ENCODE measurements at regions of chr13 and their contacts with region 1.

Region 1: GRCh38 chr13:27868641-27869435 is 51.0 kb upstream of the PDX1 start:
- DNase-seq: no peak
- H3K4me3 Mint-ChIP-seq: no peak overlapping the region
- H3K27ac Mint-ChIP-seq: no peak overlapping the region
- H3K4me1 Mint-ChIP-seq: no peaks in the 10 kb centered on the region
- H3K27me3 Mint-ChIP-seq: peaks cover 26% of the 10 kb centered on the region

Region 2: DNA sequence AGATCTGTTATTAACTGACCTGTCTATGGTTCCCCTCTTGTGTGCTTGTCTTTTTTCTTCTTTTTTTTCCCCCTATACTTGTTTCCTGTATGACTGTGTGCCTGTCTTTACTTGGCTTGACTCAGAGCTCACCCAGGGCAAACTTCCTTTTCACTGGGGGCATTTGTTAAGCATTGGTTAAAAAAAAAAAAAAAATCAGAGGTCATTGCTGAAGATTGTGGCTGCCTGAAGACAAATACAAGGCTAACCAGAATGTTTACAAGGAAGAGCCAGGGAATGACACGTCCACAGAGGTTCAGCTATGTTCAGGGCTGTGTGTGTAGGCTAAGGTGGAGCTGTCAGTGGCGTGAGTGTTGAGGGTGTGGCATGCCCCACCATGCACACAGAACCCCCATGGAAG is 295.6 kb before region 1 on chr13:
- CTCF ChIA-PET with region 1: no interaction called
- POLR2A ChIA-PET with region 1: no interaction called
- DNase-seq: no peak
- H3K4me3 Mint-ChIP-seq: no peak overlapping the region
- H3K27ac Mint-ChIP-seq: no peak overlapping the region
- H3K4me1 Mint-ChIP-seq: peaks cover 15% of the 10 kb centered on the region
- H3K27me3 Mint-ChIP-seq: no peaks in the 10 kb centered on the region

Region 3: GRCh38 chr13:27953676-27954405 is 85.0 kb after region 1 on chr13:
- CTCF ChIA-PET with region 1: interaction called, 12 read pairs
- POLR2A ChIA-PET with region 1: no interaction called
- DNase-seq: peak; percentile 69
- H3K4me3 Mint-ChIP-seq: peak overlapping the region; percentile 61
- H3K27ac Mint-ChIP-seq: no peak overlapping the region
- H3K4me1 Mint-ChIP-seq: peaks cover 14% of the 10 kb centered on the region
- H3K27me3 Mint-ChIP-seq: peaks cover 58% of the 10 kb centered on the region

Region 4: DNA sequence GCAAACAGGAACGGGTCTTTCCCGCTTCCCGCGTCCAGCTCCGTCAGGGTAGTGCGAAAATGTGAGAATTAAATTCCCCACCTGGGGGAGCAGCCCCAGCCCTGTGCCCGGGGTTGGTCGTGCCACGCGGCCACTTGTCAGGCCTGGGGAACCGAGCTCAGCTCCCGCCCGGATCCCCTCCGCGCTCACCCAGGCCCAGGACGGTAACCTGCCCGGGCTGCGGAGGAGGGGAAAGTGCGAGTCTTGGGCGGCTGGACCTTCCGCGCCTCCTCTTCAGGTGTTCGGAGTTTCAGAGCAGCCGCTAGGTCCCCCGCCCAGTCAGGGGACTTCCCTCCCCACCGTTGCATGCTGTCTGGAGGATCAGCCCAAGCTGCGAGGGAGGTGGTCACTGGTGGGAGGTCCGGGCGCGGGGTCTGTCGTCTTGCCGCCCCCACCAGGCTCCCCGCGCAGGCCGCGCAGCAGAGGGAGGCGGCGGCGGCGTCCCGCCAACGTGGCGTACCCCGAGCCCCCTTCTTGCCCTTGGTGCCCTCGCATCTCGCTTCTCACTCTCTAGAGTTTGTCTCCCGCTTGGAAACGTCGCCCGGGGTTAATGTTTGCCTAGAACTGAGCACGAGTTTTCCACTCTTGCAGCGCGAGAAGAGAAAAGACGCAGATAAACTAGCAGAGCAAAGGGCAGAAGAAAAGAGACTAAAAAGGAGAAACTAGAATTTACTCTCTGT is 111.6 kb after region 1 on chr13:
- CTCF ChIA-PET with region 1: interaction called, 10 read pairs
- POLR2A ChIA-PET with region 1: no interaction called
- DNase-seq: no peak
- H3K4me3 Mint-ChIP-seq: no peak overlapping the region
- H3K27ac Mint-ChIP-seq: no peak overlapping the region
- H3K4me1 Mint-ChIP-seq: peaks cover 17% of the 10 kb centered on the region
- H3K27me3 Mint-ChIP-seq: peaks cover 70% of the 10 kb centered on the region

Region 5: DNA sequence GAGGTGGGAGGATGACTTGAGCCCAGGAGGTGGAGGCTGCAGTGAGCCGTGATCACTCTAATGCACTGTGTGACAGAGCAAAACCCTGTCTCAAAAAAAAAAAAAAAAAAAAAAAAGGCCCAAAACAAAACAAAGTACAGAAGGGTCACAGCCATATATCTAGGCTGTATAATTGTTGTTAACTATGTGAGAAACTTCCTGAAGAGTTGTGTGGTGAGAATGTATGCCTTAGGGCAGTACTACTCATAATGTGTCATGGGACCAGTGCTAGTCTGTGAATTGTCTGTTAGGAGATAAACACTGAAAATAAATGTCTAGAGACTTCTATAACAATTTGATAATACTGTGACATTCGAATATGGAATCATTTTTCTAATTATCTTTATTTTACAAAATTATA is 312.6 kb after region 1 on chr13:
- CTCF ChIA-PET with region 1: no interaction called
- POLR2A ChIA-PET with region 1: no interaction called
- DNase-seq: no peak
- H3K4me3 Mint-ChIP-seq: no peak overlapping the region
- H3K27ac Mint-ChIP-seq: no peak overlapping the region
- H3K4me1 Mint-ChIP-seq: no peaks in the 10 kb centered on the region
- H3K27me3 Mint-ChIP-seq: no peaks in the 10 kb centered on the region